ENCODE measurements at regions of chr6 and their contacts with region 1.

Region 1: DNA sequence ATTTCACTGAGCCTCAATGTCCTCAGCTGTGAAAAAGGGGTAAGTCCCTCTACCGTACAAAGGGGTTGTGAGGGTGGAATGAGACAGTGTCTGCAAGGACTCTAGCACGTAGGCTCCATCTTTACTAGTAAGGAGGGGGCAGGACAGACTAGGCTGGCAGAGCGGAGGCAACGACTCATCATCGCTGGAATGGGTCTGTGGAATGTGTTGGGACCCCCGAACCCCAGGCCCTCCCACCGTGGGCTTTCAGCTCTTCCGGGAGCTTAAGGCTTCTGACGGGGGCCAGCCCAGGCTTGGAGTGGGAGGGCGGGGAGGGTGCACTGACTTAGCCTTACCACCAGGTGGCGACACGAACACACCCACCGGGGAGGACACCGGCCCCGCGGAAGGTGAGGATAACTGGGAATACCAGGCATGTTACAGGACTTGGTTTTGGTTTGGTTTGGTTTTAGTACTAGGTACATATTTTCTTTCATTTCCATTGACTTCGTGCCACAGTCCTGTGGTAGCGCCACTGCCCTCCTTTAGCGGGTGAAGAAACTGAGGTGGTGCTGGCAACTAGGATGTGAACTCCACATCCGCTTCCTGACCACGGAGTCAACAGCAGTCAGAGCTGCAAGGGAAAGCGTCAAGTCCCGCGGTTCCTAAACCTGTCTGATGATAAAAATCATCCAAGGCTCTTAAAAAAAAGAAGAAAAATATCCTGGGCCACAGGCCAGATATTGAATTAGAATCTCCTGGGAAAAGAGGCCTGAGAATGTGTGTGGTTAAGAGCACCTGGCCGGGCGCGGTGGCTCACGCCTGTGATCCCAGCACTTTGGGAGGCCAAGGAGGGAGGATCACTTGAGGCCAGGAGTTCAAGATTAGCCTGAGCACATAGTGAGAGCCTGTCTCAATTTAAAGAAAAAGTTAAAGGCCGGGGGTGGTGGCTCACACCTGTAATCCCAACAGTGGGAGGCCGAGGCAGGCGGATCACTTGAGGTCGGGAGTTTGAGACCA is 10.3 kb upstream of the TULP1 start:
- DNase-seq: peak; percentile 64 to 88 (median 86)
- H3K4me3 ChIP-seq: peak overlapping the region in 4 of 7 experiments; percentile 14 to 68 (median 48)
- H3K27ac ChIP-seq: no peak overlapping the region
- H3K4me1 ChIP-seq: peaks cover 0 to 11% (median 5%) of the 10 kb centered on the region in 4 experiments
- H3K27me3 ChIP-seq: peaks cover 0 to 2% (median 0%) of the 10 kb centered on the region in 5 experiments

Region 2: DNA sequence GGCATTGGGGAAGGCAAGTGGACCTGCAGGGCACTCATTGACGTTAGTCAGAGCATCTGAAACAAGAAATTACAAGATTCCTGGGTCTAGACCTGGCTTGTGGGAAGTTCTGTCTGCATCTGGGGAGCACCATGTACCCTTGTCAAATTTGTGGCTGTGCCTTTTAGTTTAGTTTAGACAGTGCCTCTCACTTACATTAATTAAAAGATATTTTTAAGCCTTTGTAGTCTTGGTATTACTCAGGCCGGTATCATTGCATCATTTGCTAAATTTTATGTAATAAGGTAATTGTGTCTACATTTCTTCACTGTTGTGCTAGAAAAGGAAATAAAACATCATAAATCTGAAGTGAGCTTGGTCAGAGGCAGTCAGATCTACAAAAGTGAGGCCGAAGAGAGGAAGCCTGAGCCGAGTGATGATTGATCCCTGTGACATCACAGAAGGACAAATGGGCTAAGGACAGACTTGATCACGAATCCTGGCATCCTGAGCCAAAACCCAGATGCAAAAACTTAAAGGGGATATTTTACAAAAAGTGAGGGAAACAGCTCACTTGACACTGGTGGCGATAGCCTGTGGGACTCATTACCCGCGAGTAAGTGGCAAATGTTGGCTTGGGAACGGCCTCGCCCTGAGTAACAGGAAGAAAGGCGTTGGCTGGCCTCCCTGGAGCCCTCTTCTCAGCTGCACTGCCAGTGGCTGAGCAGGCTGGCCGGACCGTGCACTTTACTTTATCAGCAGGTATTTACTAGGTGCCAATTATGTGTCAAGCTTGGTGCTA is 488.4 kb before region 1 on chr6:
- CTCF ChIA-PET with region 1: no interaction called
- POLR2A ChIA-PET with region 1: no interaction called
- DNase-seq: peak in 2 of 3 donors; percentile 66 to 69
- H3K4me3 ChIP-seq: peak overlapping the region in 2 of 7 experiments; percentile 11 to 37
- H3K27ac ChIP-seq: peak overlapping the region; percentile 17 to 50
- H3K4me1 ChIP-seq: peaks cover 24 to 62% (median 49%) of the 10 kb centered on the region in 4 experiments
- H3K27me3 ChIP-seq: no peaks in the 10 kb centered on the region

Region 3: GRCh38 chr6:35510916-35511561 is 11.9 kb before region 1 on chr6:
- CTCF ChIA-PET with region 1: interaction called, 15 read pairs
- POLR2A ChIA-PET with region 1: no interaction called
- DNase-seq: peak in 2 of 3 donors; percentile 36 to 49
- H3K4me3 ChIP-seq: peak overlapping the region in 2 of 7 experiments; percentile 27 to 36
- H3K27ac ChIP-seq: no peak overlapping the region
- H3K4me1 ChIP-seq: peaks cover 0 to 16% (median 6%) of the 10 kb centered on the region in 4 experiments
- H3K27me3 ChIP-seq: peaks cover 0 to 13% (median 3%) of the 10 kb centered on the region in 5 experiments

Region 4: DNA sequence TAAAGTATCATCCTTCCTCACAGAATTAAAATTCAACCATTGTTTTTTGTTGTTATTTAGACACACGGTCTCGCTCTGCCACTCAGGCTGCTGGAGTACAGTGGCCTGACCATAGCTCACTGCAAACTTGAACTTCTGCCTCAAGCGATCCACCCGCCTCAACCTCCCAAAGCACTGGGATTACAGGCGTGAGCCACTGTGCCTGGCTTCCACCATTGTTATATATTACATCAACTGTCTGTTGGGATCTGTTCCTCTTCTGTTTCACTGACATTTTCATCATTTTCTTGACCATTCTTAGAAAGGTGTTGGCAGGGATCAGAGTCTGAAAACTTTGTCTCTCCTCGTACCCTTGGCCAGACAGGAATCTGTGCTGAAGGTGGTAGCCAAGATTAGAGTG is 11.0 kb after region 1 on chr6:
- CTCF ChIA-PET with region 1: interaction called, 18 read pairs
- POLR2A ChIA-PET with region 1: no interaction called
- DNase-seq: no peak
- H3K4me3 ChIP-seq: no peak overlapping the region
- H3K27ac ChIP-seq: no peak overlapping the region
- H3K4me1 ChIP-seq: peaks cover 0 to 4% (median 3%) of the 10 kb centered on the region in 4 experiments
- H3K27me3 ChIP-seq: no peaks in the 10 kb centered on the region

Region 5: DNA sequence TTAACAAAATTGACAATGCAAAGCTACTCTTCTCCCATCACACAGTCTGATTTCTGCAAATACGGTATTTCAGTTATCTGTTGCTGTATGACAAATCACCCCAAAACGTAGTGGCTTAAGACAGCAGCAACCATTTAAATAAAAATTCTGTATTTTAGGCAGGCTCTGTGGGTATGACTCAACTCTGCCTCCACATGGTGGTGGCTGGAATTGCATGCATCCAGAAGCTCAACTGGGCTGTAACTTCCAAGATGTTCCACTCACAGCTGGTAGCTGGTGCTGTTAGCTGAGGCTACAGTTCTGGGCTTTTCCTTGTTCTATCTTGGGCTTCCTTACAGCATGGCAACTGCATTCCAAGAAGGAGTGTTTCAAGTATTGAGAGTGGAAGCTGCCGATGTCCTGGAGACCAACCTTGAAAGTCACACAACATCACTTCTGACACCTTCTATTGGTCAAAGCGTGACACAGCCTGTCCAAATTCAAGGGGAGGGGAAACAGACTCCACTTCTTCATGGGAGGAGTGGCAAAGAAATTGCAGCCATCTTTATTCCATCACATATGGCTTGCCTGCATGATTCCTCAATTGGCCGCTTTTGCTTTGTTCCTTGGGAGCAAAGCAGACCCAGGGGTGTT is 29.4 kb after region 1 on chr6:
- CTCF ChIA-PET with region 1: interaction called, 10 read pairs
- POLR2A ChIA-PET with region 1: no interaction called
- DNase-seq: peak; percentile 60 to 84 (median 73)
- H3K4me3 ChIP-seq: no peak overlapping the region
- H3K27ac ChIP-seq: no peak overlapping the region
- H3K4me1 ChIP-seq: peaks cover 0 to 4% (median 1%) of the 10 kb centered on the region in 4 experiments
- H3K27me3 ChIP-seq: no peaks in the 10 kb centered on the region

Region 6: DNA sequence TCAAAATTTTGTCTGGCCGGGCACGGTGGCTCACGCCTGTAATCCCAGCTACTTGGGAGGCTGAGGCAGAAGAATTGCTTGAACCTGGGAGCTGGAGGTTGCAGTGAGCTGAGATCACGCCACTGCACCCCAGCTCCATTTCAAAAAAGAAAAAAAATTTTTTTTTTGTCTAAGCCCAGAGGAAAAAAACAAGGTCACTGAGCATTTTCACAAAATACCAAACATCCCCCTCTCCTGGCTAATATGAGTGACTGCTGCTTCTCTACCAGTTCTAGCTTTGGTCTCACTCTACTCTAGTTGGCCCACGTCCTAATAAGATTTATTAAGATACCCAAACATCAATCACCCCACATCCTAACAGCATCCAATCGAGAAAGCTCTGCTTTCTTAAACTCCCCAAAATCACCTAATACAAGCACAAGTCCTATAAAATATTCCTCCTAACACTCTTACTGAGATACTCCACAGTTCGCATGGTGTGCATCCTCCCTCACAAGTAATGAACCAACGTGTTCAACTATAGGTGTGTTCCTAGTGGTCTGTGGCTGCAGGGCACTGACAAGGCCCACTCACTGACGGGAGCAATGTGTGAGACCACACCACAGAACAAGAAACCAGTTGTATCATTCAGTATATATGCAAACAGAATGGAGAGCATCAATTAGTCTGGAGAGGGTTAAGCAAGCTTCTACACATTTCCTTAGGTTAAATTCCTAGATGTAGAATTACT is 101.5 kb after region 1 on chr6:
- CTCF ChIA-PET with region 1: no interaction called
- POLR2A ChIA-PET with region 1: no interaction called
- DNase-seq: peak; percentile 10 to 51 (median 46)
- H3K4me3 ChIP-seq: no peak overlapping the region
- H3K27ac ChIP-seq: no peak overlapping the region
- H3K4me1 ChIP-seq: no peaks in the 10 kb centered on the region
- H3K27me3 ChIP-seq: no peaks in the 10 kb centered on the region